HEK293 (cell line): ENCODE measurements at regions of chr17 and their contacts with region 1.

Region 1: GRCh38 chr17:81711814-81712467 is at the start of gene SLC25A10:
- H3K4me3 ChIP-seq: peak within 1 kb of the TSS; percentile 73
- H3K27ac ChIP-seq: peak within 1 kb of the TSS; percentile 87
- H3K4me1 ChIP-seq: peaks cover 9% of the 10 kb centered on the region; the same call in 1 of the 2 replicates
- CTCF ChIP-seq: no peak

Region 2: GRCh38 chr17:81543339-81543675 is 168.6 kb before region 1 on chr17:
- CTCF ChIA-PET with region 1: no interaction called
- POLR2A ChIA-PET with region 1: no interaction called
- H3K4me3 ChIP-seq: no peak overlapping the region
- H3K27ac ChIP-seq: no peak overlapping the region
- H3K4me1 ChIP-seq: no peaks in the 10 kb centered on the region
- CTCF ChIP-seq: no peak

Region 3: DNA sequence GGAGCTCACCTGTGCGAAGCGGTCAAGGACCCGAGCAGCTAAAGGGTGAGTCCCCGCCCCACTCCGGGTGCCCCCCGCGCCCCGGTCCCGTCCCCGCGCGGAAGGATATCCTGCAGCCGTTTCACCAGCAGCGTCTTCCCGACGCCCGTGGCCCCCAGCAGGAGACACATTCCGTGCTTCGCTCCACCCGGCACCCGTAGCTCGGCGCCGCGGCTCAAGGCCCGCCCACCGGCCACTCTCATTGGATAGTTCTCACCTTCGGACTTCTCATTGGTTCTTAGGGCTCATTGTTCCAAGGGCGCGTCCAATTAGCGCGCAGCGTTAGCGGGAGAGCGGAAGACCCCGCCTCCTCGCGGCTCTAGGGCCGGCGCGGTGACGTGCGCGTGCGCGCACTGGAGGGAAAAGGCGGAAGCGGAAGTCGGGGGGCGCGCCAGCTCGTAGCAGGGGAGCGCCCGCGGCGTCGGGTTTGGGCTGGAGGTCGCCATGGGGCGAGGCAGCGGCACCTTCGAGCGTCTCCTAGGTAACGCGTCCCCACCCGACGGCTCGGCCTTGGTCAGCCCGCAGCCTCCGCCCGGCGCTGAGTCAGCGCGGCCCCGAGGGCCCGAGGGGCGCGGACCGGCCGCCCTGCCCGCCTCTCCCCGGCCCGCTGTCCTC is 28.2 kb before region 1 on chr17 and contains the starts of genes ARL16 and HGS:
- CTCF ChIA-PET with region 1: no interaction called
- POLR2A ChIA-PET with region 1: interaction called, 17 read pairs
- H3K4me3 ChIP-seq: peak within 1 kb of the TSS; percentile 92
- H3K27ac ChIP-seq: peak within 1 kb of the TSS; percentile 82
- H3K4me1 ChIP-seq: peaks cover 4% of the 10 kb centered on the region
- CTCF ChIP-seq: no peak

Region 4: GRCh38 chr17:81722184-81723120 is 10.5 kb after region 1 on chr17:
- CTCF ChIA-PET with region 1: interaction called, 5 read pairs
- POLR2A ChIA-PET with region 1: interaction called, 55 read pairs
- H3K4me3 ChIP-seq: no peak overlapping the region
- H3K27ac ChIP-seq: no peak overlapping the region
- H3K4me1 ChIP-seq: peaks cover 5% of the 10 kb centered on the region
- CTCF ChIP-seq: no peak

Region 5: DNA sequence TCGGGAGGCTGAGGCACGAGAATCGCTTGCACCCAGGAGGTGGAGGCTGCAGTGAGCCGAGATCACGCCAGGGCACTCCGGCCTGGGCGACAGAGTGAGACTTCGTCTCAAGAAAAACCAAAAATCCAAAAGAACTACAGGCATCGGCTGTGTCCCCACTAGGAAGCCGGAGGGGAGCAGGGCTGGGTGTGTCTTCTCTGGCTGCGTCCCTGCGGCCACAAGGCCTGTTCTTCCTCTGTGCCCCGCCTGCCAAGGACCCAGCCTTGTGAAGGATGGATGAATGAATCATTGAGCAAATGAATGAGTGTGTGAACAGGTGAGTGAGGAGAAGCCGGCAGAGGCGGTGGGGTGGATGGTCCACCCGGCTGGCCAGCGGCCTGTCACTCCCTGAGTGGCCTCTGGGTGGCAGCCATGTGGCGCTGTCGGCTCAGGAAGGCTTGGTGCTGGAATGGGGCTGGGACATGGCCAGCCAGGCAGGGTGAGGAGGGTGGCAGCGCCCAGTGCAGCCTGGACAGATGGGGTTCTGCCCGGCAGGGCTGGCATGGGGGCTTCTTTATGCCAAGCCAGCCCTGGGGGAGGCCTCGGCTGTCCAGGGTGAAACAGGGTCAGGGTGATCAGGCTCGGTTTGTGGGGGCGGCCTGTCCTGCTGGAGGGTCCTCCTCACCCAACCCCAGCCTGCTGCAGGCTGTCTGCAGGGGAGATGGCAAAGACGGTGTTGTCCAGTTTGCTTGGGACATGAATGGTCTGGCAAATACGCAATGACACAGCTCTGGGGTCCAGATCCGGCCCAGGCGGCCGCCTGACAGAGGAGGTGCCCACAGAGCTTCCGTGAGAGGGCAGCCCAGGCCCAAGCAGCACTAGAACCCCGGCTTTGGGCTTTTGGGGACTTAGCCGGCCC is 21.8 kb after region 1 on chr17:
- CTCF ChIA-PET with region 1: interaction called, 13 read pairs
- POLR2A ChIA-PET with region 1: no interaction called
- H3K4me3 ChIP-seq: no peak overlapping the region
- H3K27ac ChIP-seq: no peak overlapping the region
- H3K4me1 ChIP-seq: no peaks in the 10 kb centered on the region
- CTCF ChIP-seq: peak; percentile 97

Region 6: DNA sequence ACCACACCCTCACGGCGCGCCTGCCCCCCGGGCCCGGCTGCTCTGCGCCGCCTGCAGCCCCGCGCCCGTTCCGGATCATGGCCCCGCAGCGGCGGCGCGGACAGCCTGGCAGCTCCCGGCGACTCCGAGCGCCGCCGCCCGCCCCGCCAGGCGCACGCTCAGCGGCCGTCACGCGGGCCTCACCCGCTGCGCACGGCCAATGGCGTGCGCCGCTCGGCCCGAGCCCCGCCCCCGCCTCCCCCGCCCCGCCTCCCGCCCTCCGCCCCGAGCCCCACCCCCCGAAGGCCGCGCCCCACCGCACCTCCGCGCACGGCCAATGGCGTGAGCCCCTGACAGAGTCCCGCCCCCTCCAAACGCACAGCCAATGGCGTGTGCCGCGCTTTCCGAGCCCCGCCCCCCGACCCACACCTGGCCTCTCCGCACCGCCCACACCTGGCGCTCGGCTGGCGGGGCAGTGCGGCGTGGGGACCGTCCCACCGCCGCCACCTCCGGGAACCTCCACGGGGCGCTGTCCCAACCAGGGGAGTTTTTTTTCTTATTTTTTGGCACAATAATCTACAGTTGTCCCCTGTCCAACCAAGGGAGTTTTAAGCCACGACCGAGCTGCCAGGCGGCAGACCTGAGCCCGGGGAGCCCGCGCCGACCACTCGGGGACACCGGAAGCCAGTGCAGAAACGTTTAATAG is 199.5 kb after region 1 on chr17 and contains the start of gene PCYT2:
- CTCF ChIA-PET with region 1: no interaction called
- POLR2A ChIA-PET with region 1: no interaction called
- H3K4me3 ChIP-seq: peak within 1 kb of the TSS; percentile 52
- H3K27ac ChIP-seq: peak within 1 kb of the TSS; percentile 62; the same call in 1 of the 2 replicates
- H3K4me1 ChIP-seq: peaks cover 7% of the 10 kb centered on the region
- CTCF ChIP-seq: peak; percentile 49; the same call in 1 of the 2 replicates